K562 (cell line): ENCODE measurements at regions of chr6 and their contacts with region 1.

Region 1: GRCh38 chr6:108896111-108896661 is 48.0 kb downstream of the ARMC2 start:
- DNase-seq: no peak
- ATAC-seq: no peak
- H3K4me3 ChIP-seq: no peak overlapping the region
- H3K27ac ChIP-seq: no peak overlapping the region
- H3K4me1 ChIP-seq: no peaks in the 10 kb centered on the region
- H3K27me3 ChIP-seq: peaks cover 6 to 9% of the 10 kb centered on the region in 2 experiments; a peak in 3 of 5 replicates
- CTCF ChIP-seq: no peak
- EP300 ChIP-seq: no peak
- POLR2A ChIP-seq: no peak
- RAD21 ChIP-seq: no peak

Region 2: GRCh38 chr6:108541838-108542759 is 354.1 kb before region 1 on chr6:
- CTCF ChIA-PET with region 1: interaction called, 38 read pairs
- POLR2A ChIA-PET with region 1: no interaction called
- in situ Hi-C with region 1: loop called (anchors 5 kb)
- intact Hi-C with region 1: loop called (anchors 1 kb)
- DNase-seq: peak; percentile 64 to 81 (median 64)
- ATAC-seq: peak; percentile 94
- H3K4me3 ChIP-seq: no peak overlapping the region
- H3K27ac ChIP-seq: no peak overlapping the region
- H3K4me1 ChIP-seq: no peaks in the 10 kb centered on the region
- H3K27me3 ChIP-seq: 0 out of 5 replicates have a peak, but pooled peaks cover 0 to 4% of the 10 kb centered on the region in 2 experiments
- CTCF ChIP-seq: peak; percentile 83 to 96 (median 87)
- EP300 ChIP-seq: no peak
- POLR2A ChIP-seq: no peak
- RAD21 ChIP-seq: peak; percentile 98 to 99

Region 3: DNA sequence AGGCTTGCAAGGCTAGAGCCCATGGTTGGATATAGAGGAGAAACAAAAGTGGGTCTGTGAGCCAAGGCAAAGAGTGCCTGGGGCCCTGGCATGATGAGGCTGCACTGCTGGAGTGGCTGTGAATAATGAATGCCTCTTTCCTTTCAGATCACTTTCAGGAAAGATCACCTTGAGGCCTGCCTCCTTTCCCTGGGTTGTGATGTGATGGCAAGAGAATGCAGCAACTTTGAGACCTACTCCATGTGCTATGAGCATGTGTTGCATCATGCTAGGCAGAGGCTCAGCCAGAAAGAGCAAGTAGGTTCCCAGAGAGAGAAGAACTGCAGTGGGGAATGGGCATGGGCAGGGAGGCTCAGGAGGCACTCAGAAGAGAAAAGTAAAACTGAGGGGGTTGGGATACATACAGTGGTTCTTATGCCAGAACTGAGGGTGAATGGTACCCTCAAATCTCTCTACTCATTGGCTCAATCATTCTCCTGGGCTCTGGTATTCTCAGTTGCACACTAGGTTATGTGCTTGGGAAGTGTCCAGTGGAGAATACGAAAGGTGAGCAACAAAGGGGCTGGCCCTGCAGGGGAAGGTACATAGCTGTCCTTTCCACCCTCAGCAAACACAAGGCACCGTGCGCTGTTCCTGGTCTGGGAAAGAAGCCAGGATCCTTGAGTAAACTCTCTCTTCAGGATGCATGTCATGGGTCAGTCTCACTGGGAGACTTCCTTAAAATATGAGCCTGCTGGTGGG is 440.2 kb after region 1 on chr6:
- CTCF ChIA-PET with region 1: no interaction called
- POLR2A ChIA-PET with region 1: no interaction called
- in situ Hi-C with region 1: no loop called
- intact Hi-C with region 1: no loop called
- DNase-seq: no peak
- ATAC-seq: peak; percentile 38; the same call in 2 of the 3 replicates
- H3K4me3 ChIP-seq: no peak overlapping the region
- H3K27ac ChIP-seq: no peak overlapping the region
- H3K4me1 ChIP-seq: peaks cover 18 to 35% of the 10 kb centered on the region in 2 experiments
- H3K27me3 ChIP-seq: no peaks in the 10 kb centered on the region
- CTCF ChIP-seq: no peak
- EP300 ChIP-seq: peak; percentile 15; the same call in 1 of the 2 replicates
- POLR2A ChIP-seq: no peak
- RAD21 ChIP-seq: 0 out of 4 replicates have a peak, but pooled peaks of 1 of the 2 experiments have one; percentile 21